ENCODE measurements at regions of chr18 and their contacts with region 1.

Region 1: GRCh38 chr18:54888933-54889332 is 60.7 kb downstream of the RAB27B start:
- DNase-seq: no peak
- ATAC-seq: no peak
- H3K4me3 ChIP-seq: no peak overlapping the region
- H3K4me3 Mint-ChIP-seq: no peak overlapping the region
- H3K27ac ChIP-seq: no peak overlapping the region
- H3K27ac Mint-ChIP-seq: no peak overlapping the region
- H3K4me1 ChIP-seq: peaks cover 0 to 3% of the 10 kb centered on the region in 2 experiments
- H3K4me1 Mint-ChIP-seq: no peaks in the 10 kb centered on the region
- H3K27me3 ChIP-seq: no peaks in the 10 kb centered on the region
- H3K27me3 Mint-ChIP-seq: no peaks in the 10 kb centered on the region

Region 2: DNA sequence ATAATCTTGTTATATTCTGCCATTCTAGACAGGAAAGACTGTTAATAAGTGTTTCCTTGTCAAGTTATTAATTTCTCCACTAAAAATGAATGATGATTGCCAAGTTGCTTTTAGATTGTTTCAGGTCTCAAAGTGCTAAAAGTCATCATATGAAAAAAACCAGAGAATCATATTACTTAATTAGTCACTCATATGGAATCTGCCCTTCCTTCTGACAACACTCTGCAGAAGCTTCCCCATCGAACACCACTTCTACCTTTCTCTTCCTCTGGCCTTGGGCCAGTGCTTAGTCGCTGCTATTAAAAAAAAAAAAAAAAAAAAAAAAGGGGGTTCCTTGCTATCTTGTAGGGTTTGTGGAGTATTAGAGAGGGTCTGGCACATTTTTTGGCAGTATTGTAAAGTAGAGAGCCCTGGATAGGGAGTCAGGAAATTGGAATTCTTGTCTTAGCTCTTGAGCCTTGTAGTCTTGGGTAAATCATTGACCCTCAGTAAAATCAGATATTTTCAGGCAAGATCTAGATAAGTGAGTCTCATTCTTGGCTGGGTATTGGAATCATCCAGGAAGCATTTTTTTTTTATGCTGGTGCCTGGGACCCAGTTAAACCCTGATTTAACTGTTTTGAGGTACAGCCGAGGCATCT is 212.0 kb after region 1 on chr18:
- CTCF ChIA-PET with region 1: no interaction called
- POLR2A ChIA-PET with region 1: interaction called in 1 of 2 experiments, 16 read pairs
- DNase-seq: no peak
- ATAC-seq: no peak
- H3K4me3 ChIP-seq: no peak overlapping the region
- H3K4me3 Mint-ChIP-seq: no peak overlapping the region
- H3K27ac ChIP-seq: no peak overlapping the region
- H3K27ac Mint-ChIP-seq: no peak overlapping the region
- H3K4me1 ChIP-seq: no peaks in the 10 kb centered on the region
- H3K4me1 Mint-ChIP-seq: no peaks in the 10 kb centered on the region
- H3K27me3 ChIP-seq: no peaks in the 10 kb centered on the region
- H3K27me3 Mint-ChIP-seq: peaks cover 3 to 10% of the 10 kb centered on the region in 2 donors

Region 3: GRCh38 chr18:55713707-55714106 is 824.8 kb after region 1 on chr18:
- CTCF ChIA-PET with region 1: no interaction called
- POLR2A ChIA-PET with region 1: no interaction called
- DNase-seq: no peak
- ATAC-seq: no peak
- H3K4me3 ChIP-seq: no peak overlapping the region
- H3K4me3 Mint-ChIP-seq: no peak overlapping the region
- H3K27ac ChIP-seq: no peak overlapping the region
- H3K27ac Mint-ChIP-seq: no peak overlapping the region
- H3K4me1 ChIP-seq: no peaks in the 10 kb centered on the region
- H3K4me1 Mint-ChIP-seq: no peaks in the 10 kb centered on the region
- H3K27me3 ChIP-seq: no peaks in the 10 kb centered on the region
- H3K27me3 Mint-ChIP-seq: no peaks in the 10 kb centered on the region